GM10248 (cell line): ENCODE measurements at regions of chr6 and their contacts with region 1.

Region 1: DNA sequence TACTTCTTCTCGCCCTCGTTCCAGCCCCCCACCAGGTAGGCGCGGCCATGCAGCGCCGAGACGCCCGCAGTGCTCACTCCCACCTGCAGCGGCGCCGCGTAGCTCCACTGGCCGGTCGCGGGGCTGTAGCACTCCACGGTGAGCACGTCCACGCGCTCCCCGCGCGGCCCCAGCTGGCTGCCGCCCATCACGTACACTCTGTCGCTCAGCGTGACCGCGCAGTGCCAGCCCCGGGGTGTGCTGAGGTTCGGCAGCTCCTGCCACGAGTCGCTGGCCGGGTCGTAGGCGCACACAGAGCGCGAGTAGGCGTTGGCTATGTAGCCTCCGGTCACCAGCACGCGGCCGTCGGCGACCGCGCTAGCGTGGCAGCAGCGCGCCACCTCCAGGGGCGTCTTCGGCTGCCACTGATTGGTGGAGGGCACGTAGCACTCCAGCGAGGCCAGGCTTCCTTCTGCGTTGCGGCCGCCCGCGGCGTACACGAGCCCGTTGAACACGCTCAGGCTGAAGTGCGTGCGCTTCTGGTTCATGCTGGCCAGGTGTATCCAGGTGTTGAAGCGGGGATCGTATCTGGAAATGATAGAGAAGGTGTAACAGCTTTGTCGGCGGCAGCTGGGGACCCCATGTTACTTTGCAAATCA is 13.7 kb downstream of the KLHL31 start:
- DNase-seq: peak; percentile 69
- CTCF ChIP-seq: peak; percentile 20

Region 2: DNA sequence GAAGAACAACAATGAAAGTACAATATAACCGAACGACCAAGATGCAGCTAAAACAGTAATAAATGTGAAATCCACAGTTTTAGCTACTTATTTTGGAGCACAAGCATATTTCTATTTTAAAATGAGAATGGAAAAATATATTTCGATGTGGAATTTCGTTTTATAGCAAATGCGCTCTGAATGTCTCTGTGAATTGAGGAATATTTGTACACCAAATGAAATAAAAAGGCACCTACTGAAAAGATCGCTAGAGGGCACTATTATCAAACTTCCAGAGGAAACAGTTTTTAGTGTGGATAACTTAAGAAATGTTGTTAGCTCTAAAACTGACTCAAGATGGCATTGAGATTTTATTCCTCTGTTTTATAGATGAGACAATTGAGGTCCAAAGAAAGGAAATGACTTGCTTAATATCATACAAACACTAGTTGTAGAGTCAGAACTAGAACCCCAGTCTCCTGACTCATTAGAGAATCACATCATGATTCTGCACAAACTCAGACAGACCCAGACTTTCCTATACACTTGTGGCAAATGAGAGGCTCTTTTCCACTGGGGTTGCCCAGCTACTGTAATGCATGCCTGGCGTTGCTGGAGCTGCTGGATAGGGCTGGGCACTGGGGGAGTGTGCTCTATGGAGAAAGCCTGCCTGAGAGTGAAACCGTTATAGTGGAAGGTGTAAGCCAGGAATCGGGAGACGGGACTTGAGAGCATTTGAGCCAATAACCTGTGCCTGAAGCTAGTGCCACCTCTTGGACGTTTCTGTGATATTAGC is 158.8 kb before region 1 on chr6:
- CTCF ChIA-PET with region 1: interaction called, 67 read pairs
- POLR2A ChIA-PET with region 1: no interaction called
- DNase-seq: peak; percentile 31
- CTCF ChIP-seq: peak; percentile 68

Region 3: GRCh38 chr6:53634184-53634631 is 17.7 kb before region 1 on chr6:
- CTCF ChIA-PET with region 1: interaction called, 21 read pairs
- POLR2A ChIA-PET with region 1: no interaction called
- DNase-seq: no peak
- CTCF ChIP-seq: no peak

Region 4: GRCh38 chr6:53664623-53665022 is 12.7 kb after region 1 on chr6:
- CTCF ChIA-PET with region 1: interaction called, 19 read pairs
- POLR2A ChIA-PET with region 1: no interaction called
- DNase-seq: no peak
- CTCF ChIP-seq: no peak